SK-N-SH (cell line): ENCODE measurements at regions of chr1 and their contacts with region 1.

Region 1: DNA sequence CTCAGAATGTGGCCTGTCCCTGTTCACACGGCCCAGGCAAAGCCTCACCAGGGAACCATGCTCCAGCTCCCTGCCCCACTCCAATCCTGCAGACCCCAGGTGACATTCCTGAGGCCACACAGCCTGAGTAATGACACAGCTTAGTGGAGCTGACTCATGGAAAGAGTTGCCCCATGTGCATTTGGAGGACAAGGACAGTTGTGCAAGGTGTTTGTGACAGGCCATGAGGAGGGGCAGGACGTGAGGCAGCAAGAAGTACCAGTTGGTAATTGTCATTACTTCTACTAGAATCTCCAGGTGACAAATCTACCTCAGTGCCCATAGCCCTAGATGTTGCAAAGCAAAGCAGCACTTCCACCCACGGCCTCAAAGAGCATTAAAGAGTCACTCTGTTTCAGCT is 15.2 kb downstream of the PRR9 start:
- DNase-seq: no peak
- H3K4me3 ChIP-seq: no peak overlapping the region
- H3K27ac ChIP-seq: no peak overlapping the region
- H3K4me1 ChIP-seq: no peaks in the 10 kb centered on the region
- H3K27me3 ChIP-seq: peaks cover 5% of the 10 kb centered on the region; the same call in 1 of the 2 replicates
- CTCF ChIP-seq: no peak
- EP300 ChIP-seq: no peak
- RAD21 ChIP-seq: no peak

Region 2: GRCh38 chr1:153174624-153175023 is 57.9 kb before region 1 on chr1:
- CTCF ChIA-PET with region 1: no interaction called
- POLR2A ChIA-PET with region 1: no interaction called
- DNase-seq: no peak
- H3K4me3 ChIP-seq: no peak overlapping the region
- H3K27ac ChIP-seq: no peak overlapping the region
- H3K4me1 ChIP-seq: no peaks in the 10 kb centered on the region
- H3K27me3 ChIP-seq: peaks cover 16% of the 10 kb centered on the region
- CTCF ChIP-seq: no peak
- EP300 ChIP-seq: no peak
- RAD21 ChIP-seq: no peak

Region 3: DNA sequence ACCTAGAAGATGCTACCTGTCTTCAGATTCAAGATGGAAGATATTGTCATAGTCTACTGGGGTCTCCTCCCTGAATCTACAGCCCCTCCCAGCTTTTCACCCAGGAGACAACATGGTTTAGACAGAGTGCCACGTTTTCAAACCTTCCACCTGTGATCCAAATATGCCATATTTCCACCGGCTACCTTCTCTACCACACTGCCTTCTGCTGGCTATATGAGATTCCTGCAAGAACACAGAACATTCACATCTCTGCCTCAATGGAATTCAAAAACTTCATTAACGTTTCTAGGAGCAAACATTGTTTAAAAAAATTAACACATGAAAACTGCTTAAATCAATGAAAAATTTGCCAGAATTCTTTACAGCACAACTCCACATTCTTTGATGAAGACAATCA is 42.2 kb before region 1 on chr1:
- CTCF ChIA-PET with region 1: no interaction called
- POLR2A ChIA-PET with region 1: no interaction called
- DNase-seq: no peak
- H3K4me3 ChIP-seq: no peak overlapping the region
- H3K27ac ChIP-seq: no peak overlapping the region
- H3K4me1 ChIP-seq: no peaks in the 10 kb centered on the region
- H3K27me3 ChIP-seq: no peaks in the 10 kb centered on the region
- CTCF ChIP-seq: peak; percentile 35; the same call in 1 of the 2 replicates
- EP300 ChIP-seq: no peak
- RAD21 ChIP-seq: no peak

Region 4: DNA sequence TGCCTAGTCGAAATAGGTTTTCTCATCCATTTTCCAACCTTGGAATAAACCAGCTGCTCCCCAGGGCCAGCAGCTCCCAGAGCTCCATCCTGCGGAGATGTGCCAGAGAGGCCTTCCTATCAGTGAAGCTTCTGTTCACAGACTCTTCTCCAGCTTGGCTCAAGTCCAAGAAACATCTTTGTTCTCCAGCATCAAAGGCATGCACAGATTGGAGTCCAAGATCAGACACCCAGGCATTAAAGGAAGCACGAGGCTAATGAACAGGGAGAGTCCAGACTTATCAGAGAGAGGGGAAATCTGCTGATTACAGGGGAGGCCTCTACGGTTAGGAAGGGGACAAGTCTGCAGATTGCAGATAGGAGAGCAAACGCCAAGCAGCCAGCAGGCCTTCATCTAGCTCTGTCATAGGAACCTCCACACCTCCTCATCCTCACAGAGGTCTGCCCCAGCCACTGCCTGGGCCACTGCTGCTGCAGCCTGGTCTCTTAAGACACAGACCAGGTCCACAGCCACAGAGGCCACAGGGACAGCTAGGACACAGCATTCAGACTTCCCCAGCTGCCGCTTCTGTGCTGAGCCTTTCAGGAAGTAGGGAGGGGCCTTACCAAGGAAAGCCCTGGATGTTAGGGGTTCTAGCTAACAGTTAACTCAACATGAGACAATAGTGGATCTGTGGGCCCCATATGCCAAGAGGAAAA is 11.8 kb before region 1 on chr1:
- CTCF ChIA-PET with region 1: interaction called, 19 read pairs
- POLR2A ChIA-PET with region 1: no interaction called
- DNase-seq: no peak
- H3K4me3 ChIP-seq: no peak overlapping the region
- H3K27ac ChIP-seq: no peak overlapping the region
- H3K4me1 ChIP-seq: no peaks in the 10 kb centered on the region; a peak in 1 of 4 replicates
- H3K27me3 ChIP-seq: peaks cover 25% of the 10 kb centered on the region; the same call in 1 of the 2 replicates
- CTCF ChIP-seq: no peak
- EP300 ChIP-seq: no peak
- RAD21 ChIP-seq: no peak

Region 5: GRCh38 chr1:153293851-153294250 is 61.3 kb after region 1 on chr1:
- CTCF ChIA-PET with region 1: no interaction called
- POLR2A ChIA-PET with region 1: no interaction called
- DNase-seq: no peak
- H3K4me3 ChIP-seq: no peak overlapping the region
- H3K27ac ChIP-seq: no peak overlapping the region
- H3K4me1 ChIP-seq: no peaks in the 10 kb centered on the region
- H3K27me3 ChIP-seq: peaks cover 31% of the 10 kb centered on the region
- CTCF ChIP-seq: no peak
- EP300 ChIP-seq: no peak
- RAD21 ChIP-seq: no peak

Region 6: DNA sequence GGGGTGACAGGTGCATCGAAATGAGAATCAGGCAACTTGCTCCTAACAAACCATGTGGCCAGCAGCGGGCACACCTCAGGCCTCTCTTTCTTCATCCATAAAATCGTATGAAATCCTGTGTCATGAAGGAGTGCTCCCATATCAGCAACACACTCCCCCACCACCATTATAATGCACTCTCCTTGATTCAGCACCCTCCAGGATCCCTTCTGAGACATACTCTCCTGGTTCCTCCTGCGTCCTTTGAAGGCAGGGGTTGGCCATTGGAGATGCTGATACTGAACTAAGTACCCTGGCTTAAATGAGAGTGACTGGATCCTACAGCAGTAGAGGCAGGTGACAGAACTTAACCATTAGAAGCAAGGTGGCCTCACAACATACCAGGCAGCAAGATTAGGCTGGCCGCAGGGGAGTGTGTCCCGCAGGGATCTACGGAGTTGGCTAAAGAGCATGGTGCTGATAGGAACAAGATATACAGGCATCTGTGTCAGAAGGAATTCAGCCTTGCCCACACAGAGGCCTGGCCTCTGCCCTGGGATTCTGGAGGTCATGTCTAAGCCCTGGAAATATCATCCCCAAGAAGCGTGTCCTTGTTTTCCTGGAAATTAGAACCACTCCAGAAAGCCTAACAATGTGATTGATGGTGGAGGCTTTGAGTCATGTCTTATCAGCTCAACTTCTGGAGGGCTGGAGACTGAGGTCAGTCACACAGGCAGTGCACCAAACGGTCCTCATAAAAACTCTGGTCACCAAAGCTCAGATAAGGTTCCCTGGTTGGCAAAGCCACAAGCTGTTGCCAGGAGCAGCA is 200.5 kb after region 1 on chr1:
- CTCF ChIA-PET with region 1: no interaction called
- POLR2A ChIA-PET with region 1: no interaction called
- DNase-seq: no peak
- H3K4me3 ChIP-seq: no peak overlapping the region
- H3K27ac ChIP-seq: no peak overlapping the region
- H3K4me1 ChIP-seq: no peaks in the 10 kb centered on the region
- H3K27me3 ChIP-seq: peaks cover 12% of the 10 kb centered on the region; the same call in 1 of the 2 replicates
- CTCF ChIP-seq: no peak
- EP300 ChIP-seq: no peak
- RAD21 ChIP-seq: no peak